ENCODE measurements at regions of chr3 and their contacts with region 1.

Region 1: GRCh38 chr3:8987645-8988383 is 24.5 kb upstream of the RAD18 start:
- DNase-seq: no peak
- H3K4me3 ChIP-seq: no peak overlapping the region
- CTCF ChIP-seq: peak; percentile 87

Region 2: GRCh38 chr3:8638994-8639658 is 348.7 kb before region 1 on chr3:
- CTCF ChIA-PET with region 1: no interaction called
- POLR2A ChIA-PET with region 1: no interaction called
- DNase-seq: no peak
- H3K4me3 ChIP-seq: no peak overlapping the region
- CTCF ChIP-seq: no peak

Region 3: DNA sequence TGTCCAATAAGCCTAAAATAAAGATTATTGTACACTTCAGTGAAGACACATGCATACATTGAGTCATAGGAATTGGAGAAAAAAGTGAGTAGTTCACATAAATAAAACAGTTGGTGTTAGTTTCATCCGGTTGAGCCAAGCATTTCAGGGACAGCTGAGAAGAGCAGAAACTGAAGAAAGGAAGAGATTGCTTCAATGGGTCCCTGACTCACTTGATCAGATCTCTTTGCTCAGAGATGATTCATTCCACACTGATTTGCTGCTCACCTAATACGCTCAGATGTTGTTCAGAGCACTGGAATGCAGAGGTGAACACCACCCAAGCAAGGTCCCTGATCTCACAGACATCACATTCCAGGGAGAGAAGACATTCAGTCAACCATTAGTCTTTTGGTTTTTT is 118.2 kb before region 1 on chr3:
- CTCF ChIA-PET with region 1: no interaction called
- POLR2A ChIA-PET with region 1: no interaction called
- DNase-seq: peak; percentile 91
- H3K4me3 ChIP-seq: no peak overlapping the region
- CTCF ChIP-seq: no peak

Region 4: DNA sequence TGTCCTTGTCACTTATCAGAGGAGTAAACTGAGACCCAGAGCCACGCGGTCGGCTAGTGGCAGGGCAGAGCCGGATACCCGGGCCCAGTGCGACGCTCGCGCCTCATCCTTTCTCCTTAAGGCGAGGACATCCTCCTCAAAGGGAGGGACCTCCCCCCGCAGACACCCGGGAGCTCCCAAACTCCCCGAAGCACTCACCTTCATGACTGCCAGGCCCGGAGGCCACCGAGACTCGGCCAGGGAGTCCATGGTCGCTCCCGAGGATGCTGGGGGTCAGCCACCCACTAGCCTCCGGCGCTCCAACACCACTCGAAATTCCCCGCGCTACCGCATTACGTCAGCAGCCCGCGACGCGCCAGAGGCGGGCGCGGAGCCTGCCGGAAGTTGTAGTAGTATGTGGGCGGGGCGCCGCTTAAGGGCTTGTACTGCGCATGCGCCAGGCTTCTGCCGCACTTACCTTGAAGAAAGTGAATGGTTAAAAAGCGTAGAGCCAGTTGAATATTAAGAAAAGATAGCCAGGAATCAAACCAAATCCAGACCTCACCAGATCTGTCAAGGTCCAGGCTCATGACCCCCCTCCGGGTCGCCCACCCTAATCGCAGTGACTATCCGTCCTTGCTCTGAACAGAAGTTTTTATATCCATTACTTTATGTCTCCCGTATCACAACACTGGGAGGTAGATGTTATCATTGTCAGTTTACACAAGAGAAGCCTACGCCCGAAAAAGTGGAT is 24.5 kb before region 1 on chr3 and contains the start of gene RAD18:
- CTCF ChIA-PET with region 1: interaction called, 139 read pairs
- POLR2A ChIA-PET with region 1: no interaction called
- DNase-seq: peak; percentile 40
- H3K4me3 ChIP-seq: peak within 1 kb of the TSS; percentile 87
- CTCF ChIP-seq: no peak

Region 5: GRCh38 chr3:8970971-8971589 is 16.7 kb before region 1 on chr3:
- CTCF ChIA-PET with region 1: interaction called, 139 read pairs
- POLR2A ChIA-PET with region 1: no interaction called
- DNase-seq: no peak
- H3K4me3 ChIP-seq: no peak overlapping the region
- CTCF ChIP-seq: peak; percentile 79

Region 6: GRCh38 chr3:9008550-9009255 is 20.9 kb after region 1 on chr3:
- CTCF ChIA-PET with region 1: interaction called, 49 read pairs
- POLR2A ChIA-PET with region 1: no interaction called
- DNase-seq: no peak
- H3K4me3 ChIP-seq: no peak overlapping the region
- CTCF ChIP-seq: no peak

Region 7: GRCh38 chr3:9013782-9014563 is 26.2 kb after region 1 on chr3:
- CTCF ChIA-PET with region 1: interaction called, 49 read pairs
- POLR2A ChIA-PET with region 1: no interaction called
- DNase-seq: no peak
- H3K4me3 ChIP-seq: no peak overlapping the region
- CTCF ChIP-seq: peak; percentile 10

Region 8: DNA sequence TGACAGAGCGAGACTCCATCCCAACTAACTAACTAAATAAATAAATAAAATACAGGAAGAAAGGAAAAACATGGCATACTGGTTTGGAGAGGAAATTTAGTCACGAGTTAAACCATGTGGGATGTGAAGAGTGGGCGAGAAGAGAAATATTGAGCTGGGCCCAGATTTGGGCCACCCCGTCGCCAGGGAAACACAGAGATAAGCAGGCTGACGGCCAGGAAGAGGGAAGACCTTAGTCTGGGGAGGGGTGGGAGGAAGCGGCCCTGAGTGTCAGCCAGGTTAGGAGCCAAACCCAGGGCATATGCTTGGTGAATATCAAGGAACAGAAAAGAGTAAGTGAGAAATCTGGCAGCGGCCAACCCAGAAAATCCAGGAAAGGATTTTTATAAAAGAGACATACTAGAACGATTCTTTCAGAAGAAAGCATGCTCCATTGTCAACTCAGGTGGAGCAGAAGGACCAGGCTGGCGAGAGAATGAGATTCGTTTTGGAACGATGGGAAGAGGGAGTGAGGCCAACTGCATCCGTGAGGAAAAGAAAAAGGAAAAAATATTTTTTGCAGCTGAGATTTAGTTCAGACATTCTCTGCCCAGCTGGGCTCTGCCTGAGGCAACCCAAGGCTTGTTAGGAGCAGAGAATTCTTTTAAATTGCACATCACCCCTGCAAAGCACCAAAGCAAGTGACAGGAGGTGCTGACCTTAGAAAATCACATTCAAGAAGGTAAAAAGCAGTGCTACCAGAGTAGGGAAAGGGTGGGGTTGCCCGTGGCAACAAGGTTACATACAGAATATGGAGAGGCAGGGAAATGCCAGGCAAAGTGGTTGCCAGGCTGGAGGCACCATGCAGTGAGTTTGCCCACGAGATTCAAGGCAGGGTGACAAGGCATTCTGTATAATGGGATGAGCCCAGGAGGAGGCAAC is 34.8 kb after region 1 on chr3:
- CTCF ChIA-PET with region 1: interaction called, 11 read pairs
- POLR2A ChIA-PET with region 1: no interaction called
- DNase-seq: no peak
- H3K4me3 ChIP-seq: no peak overlapping the region
- CTCF ChIP-seq: no peak

Region 9: DNA sequence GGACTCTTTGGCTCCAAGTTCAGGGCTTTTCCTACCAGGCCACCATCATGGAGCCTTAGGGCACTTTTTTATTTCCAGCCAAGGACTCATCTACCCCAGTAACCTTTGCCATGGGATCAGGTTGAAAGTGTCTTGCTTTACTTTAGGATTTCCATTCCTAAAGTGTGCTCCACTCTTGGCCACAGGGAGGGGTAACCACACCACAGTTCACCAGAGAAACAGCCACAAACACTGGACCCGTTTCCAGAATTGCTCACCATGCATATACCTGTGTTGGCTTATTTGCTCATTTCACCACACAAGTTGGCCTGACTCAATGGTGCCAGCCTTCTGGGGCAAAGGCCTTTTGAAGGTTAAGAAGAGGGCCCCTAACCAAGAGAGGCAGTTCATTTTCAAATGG is 46.1 kb after region 1 on chr3:
- CTCF ChIA-PET with region 1: no interaction called
- POLR2A ChIA-PET with region 1: no interaction called
- DNase-seq: no peak
- H3K4me3 ChIP-seq: no peak overlapping the region
- CTCF ChIP-seq: no peak

Region 10: DNA sequence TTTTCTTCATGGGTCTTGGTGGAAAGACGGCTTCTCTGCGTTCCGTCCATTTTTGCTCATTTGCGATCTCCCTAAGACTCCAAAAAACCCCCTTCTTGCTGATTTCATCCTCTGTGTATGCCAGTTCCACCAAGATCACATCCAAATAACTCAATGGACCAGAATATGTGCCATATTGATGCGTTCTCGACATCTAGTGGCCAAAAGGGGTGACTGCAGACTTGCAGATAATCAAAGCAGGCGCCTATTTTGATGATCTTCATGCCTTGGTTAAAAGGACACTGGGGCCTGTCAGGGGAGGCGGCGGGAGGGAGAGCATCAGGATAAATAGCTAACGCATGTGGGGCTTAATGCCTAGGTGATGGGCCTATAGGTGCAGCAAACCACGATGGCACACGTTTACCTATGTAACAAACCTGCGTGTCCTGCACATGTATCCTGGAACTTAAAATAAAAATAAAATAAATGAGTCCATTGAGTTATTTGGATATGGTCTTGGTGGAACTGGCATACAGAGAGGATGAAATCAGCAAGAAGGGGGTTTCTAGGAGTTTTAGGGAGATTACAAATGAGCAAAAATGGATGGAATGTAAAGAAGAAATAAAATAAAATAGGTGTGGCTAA is 79.7 kb after region 1 on chr3:
- CTCF ChIA-PET with region 1: interaction called, 127 read pairs
- POLR2A ChIA-PET with region 1: interaction called, 3 read pairs
- DNase-seq: peak; percentile 23
- H3K4me3 ChIP-seq: no peak overlapping the region
- CTCF ChIP-seq: peak; percentile 85

Region 11: GRCh38 chr3:9214599-9214998 is 226.8 kb after region 1 on chr3:
- CTCF ChIA-PET with region 1: no interaction called
- POLR2A ChIA-PET with region 1: no interaction called
- DNase-seq: no peak
- H3K4me3 ChIP-seq: no peak overlapping the region
- CTCF ChIP-seq: no peak

Measured in AG04449 (cell line).